Psoas muscle (tissue), 8 donors: ENCODE measurements at regions of chr9 and their contacts with region 1.

Region 1: DNA sequence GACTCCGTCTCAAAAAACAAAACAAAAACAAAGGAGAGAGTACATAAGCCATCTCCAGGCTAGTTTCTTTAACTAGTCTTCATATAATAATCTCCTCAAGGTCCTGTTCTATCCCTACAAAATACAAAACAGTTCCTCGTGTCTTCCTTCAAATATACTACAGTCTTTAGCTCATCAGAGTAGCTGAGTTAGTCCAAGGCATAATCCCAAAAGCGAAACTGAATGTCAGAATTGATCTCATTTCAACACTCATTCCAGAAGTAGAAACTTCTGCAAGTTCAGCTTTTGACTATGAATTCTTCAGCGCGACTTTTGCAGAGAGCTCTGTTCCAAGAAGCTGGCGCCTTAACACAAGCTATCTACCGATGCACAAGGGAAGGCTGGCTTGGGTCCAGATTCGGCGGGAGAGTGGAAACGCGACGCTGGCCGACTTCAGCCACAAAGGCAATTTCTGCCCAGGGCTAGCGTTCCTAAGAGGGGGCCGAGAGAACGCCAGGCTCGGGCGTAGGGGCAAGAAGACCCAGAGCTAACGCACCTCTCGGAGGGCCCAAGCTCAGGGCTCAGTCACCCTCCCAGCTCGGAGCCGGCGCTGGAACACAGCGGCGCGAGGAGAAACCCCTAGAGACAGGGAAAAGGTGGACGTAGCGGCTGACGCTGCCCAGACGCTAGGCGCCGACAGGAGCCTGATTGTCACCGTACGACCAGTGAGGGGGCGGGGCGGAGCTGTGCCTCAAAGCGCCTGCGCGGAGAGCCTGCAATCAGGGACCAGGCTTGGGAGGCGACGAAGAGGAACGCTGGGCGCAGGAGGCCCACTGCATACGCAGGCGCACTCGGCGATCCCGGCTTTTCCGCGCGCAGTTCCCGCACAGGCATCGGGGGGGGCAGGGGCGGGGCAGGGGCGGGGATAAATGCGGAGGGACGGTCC is 469 bp upstream of the HSDL2 start:
- DNase-seq: peak; percentile 100
- ATAC-seq: peak; percentile 92 to 97 (median 96)
- H3K4me3 ChIP-seq: peak overlapping the region; percentile 75
- H3K27ac ChIP-seq: peak overlapping the region; percentile 96
- H3K4me1 ChIP-seq: peaks cover 32% of the 10 kb centered on the region
- H3K27me3 ChIP-seq: no peaks in the 10 kb centered on the region
- CTCF ChIP-seq: no peak

Region 2: GRCh38 chr9:111759762-111760639 is 619.4 kb before region 1 on chr9:
- intact Hi-C with region 1: loop called in 1 of 2 experiments (anchors 5 kb)
- DNase-seq: no peak
- ATAC-seq: peak; percentile 81 to 88 (median 82)
- H3K4me3 ChIP-seq: no peak overlapping the region
- H3K27ac ChIP-seq: no peak overlapping the region
- H3K4me1 ChIP-seq: no peaks in the 10 kb centered on the region
- H3K27me3 ChIP-seq: no peaks in the 10 kb centered on the region
- CTCF ChIP-seq: peak; percentile 75

Region 3: DNA sequence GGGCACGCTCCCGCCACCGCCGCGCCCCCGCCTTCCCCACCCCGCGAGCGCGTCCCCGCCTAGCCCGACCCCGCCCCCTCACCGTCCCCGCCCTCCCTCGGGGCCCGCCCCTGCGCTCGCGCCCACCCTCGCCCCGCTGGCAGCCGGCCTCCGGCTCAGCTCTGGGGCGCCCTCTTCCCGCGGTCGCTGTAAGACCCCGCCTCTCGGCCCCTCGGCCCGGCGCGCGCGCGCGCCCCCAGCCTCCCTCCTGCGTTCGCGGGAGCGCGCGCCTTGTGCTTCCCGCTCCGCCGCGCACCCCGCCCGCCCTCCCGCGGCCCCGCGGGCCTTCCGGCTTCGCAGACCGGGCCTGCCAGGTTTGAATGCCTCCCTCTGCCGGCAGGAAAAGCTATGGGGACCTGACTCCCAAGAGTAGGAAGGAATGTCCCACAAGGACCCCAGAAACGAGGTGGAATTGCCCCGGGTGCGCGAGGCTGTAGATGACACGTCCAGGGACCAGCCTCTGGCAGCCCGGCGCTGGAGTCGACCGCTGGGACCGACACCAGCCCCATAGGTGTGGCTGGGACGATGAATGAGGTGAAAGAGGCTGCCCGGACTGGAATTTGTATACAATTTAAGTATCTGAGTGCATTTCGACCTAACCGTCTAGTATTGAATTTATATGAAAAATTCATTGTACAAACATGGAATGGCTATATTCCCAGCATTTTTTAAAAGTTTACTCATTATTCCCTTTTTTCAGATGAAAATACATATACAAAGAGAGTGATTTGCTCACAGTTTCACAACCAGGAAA is 45.6 kb before region 1 on chr9:
- intact Hi-C with region 1: loop called in 1 of 2 experiments (anchors 5 kb)
- DNase-seq: peak; percentile 96 to 97
- ATAC-seq: peak; percentile 92 to 96 (median 93)
- H3K4me3 ChIP-seq: peak overlapping the region; percentile 76
- H3K27ac ChIP-seq: peak overlapping the region; percentile 94
- H3K4me1 ChIP-seq: peaks cover 21% of the 10 kb centered on the region
- H3K27me3 ChIP-seq: no peaks in the 10 kb centered on the region
- CTCF ChIP-seq: peak; percentile 61

Region 4: GRCh38 chr9:112421771-112422222 is 42.4 kb after region 1 on chr9:
- intact Hi-C with region 1: loop called (anchors 5 kb)
- DNase-seq: peak; percentile 19 to 59
- ATAC-seq: peak; percentile 98 to 99 (median 98)
- H3K4me3 ChIP-seq: peak overlapping the region; percentile 12
- H3K27ac ChIP-seq: peak overlapping the region; percentile 71
- H3K4me1 ChIP-seq: peaks cover 7% of the 10 kb centered on the region
- H3K27me3 ChIP-seq: no peaks in the 10 kb centered on the region
- CTCF ChIP-seq: no peak

Region 5: DNA sequence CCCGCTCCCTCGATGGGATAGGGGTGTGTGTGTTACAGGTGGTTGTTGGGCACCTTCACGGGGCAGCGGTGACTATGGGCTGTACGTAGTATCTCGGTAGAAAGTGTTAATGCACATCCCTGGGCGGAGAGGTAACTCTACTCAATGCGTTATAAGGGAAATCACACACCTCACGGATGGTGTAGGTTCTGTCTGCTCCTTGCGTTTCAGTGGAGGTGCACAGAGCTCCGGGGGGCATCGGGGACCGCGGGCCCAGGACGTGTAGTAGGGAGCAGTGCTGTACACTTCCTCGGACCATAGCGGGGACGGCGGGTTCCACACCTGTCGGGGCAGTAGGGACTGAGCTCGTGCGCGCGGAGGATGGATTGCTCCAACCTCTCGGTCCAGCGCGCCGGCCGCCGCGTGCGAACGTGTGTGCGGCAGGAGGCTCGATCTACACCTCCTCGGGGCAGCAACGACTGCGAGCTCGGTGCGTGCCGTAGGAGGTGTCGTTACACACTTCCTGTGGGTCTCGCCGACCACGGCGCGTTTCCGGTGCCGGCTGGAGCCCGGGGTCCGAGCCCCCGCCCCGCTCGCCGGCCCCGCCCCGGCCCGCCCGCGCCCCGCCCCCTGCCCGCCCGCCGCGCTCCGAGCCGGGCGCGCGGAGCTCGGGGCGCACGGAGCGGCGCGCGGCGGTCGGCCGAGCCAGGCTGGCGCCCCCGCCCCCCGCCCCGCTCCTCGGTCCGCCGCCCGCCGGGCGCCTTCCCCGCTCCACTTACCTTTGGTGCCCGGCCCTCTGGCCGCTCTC is 107.0 kb after region 1 on chr9 and contains the start of gene KIAA1958:
- intact Hi-C with region 1: loop called in 1 of 2 experiments (anchors 2 kb)
- DNase-seq: peak; percentile 77 to 86
- ATAC-seq: peak; percentile 86 to 93 (median 90)
- H3K4me3 ChIP-seq: peak within 1 kb of the TSS; percentile 93
- H3K27ac ChIP-seq: peak within 1 kb of the TSS; percentile 75
- H3K4me1 ChIP-seq: peaks cover 5% of the 10 kb centered on the region
- H3K27me3 ChIP-seq: no peaks in the 10 kb centered on the region
- CTCF ChIP-seq: no peak
- total RNA-seq, gene KIAA1958: 1.5 to 4.1 (median 3.2) TPM

Region 6: GRCh38 chr9:112750111-112750767 is 370.8 kb after region 1 on chr9 and contains the start of gene SNX30:
- intact Hi-C with region 1: loop called in 1 of 2 experiments (anchors 5 kb)
- DNase-seq: peak; percentile 91 to 95
- ATAC-seq: peak; percentile 96 to 97 (median 96)
- H3K4me3 ChIP-seq: peak within 1 kb of the TSS; percentile 98
- H3K27ac ChIP-seq: peak within 1 kb of the TSS; percentile 89
- H3K4me1 ChIP-seq: peaks cover 36% of the 10 kb centered on the region
- H3K27me3 ChIP-seq: no peaks in the 10 kb centered on the region
- CTCF ChIP-seq: peak; percentile 11
- total RNA-seq, gene SNX30: 1.6 to 2.8 (median 2.3) TPM